AG04450 (cell line): ENCODE measurements at regions of chr9 and their contacts with region 1.

Region 1: GRCh38 chr9:127883959-127884358 is 6.5 kb upstream of the AK1 start:
- DNase-seq: no peak
- H3K4me3 ChIP-seq: no peak overlapping the region
- H3K27ac ChIP-seq: no peak overlapping the region
- H3K27me3 ChIP-seq: no peaks in the 10 kb centered on the region
- CTCF ChIP-seq: no peak

Region 2: DNA sequence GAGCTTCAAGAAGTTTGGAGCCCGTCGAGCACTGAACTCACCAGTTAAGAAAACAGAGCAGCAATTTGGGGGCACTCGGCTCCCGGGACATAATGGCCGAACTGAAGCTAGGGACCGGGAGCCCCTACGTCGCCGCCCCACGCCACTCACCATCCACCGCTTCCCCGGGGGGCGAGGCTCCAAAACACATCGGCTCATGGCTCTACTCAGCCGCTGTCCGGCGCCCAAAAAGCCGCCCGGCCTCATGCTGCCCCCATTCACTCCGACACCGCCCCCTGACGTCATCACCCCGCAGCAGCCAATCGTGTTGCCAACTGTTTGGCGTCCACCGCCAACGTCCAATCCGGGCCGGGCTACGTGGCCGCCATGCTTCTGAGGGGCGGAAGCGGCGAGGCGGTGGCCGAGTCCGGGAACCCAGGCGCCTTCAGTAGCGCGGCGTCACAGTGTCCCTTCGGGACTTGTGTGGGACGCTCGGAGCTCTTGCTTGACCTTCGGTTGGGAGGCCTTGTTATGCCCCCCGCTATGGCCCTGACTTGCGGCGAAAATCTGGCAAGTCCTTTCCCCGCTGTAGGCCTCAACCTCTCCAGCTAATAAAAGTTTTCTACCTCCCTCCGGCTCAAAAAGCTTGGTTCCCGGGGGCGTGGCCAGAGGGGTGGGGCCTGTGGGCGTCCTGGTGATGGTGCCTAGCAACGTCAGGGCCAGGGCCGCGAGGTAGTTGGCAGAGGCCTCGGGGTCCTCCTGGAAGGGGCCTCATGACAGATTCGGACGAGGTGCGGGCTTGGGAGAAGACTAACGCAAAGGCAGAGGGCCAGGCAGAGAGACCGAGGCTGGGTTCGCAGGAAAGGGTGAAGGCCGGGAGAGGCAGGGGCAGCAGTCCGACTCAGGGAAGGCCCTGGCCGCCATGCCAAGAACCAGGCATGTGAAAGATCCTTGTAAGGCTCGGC is 168.3 kb before region 1 on chr9 and contains the starts of genes PTRH1 and TTC16:
- CTCF ChIA-PET with region 1: no interaction called
- POLR2A ChIA-PET with region 1: no interaction called
- DNase-seq: peak; percentile 76
- H3K4me3 ChIP-seq: peak within 1 kb of the TSS; percentile 83
- H3K27ac ChIP-seq: peak within 1 kb of the TSS; percentile 61
- H3K27me3 ChIP-seq: no peaks in the 10 kb centered on the region
- CTCF ChIP-seq: no peak
- polyA plus RNA-seq, gene PTRH1: 5.2 and 6.1 TPM in 2 replicates
- polyA plus RNA-seq, gene TTC16: not detected in 2 replicates

Region 3: DNA sequence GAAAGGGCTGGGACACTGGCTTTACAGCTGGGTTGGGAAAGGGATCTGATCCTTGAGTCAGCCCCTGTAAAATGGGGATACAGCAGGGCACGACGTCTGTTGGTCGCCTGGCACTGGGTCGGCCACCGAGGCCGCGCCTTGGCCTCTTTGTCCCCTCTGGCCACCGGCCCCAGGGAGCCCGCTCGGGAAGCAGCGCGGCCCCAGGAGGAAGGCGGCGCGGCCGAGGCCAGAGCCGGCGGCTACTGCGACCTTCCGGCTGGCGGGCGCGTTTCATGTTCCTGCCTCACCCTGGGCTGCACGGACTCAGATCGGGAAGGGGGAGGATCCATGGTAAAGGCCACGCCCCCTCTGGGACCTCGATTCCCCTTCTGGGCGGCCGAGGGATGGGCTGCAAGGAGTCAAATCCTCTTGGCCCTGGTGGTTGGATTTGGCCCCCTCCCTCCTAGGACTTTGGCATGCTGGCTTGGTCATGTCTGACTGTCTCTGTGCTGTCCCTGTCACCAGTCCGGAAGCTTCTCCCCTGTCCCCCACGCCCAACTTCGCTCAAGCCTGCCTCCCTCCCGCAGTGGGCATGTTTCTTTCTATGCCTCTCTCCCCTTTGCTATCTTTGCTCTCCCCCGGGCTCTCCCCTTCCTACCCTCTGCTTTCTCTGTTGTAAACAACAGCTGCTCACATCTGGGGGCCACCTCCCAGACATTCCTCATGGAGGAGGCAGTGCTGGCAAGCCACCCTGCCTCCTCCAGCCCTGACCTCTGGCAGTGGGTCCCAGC is 55.5 kb before region 1 on chr9:
- CTCF ChIA-PET with region 1: no interaction called
- POLR2A ChIA-PET with region 1: interaction called, 13 read pairs
- DNase-seq: no peak
- H3K4me3 ChIP-seq: peak overlapping the region; percentile 20
- H3K27ac ChIP-seq: peak overlapping the region; percentile 70
- H3K27me3 ChIP-seq: no peaks in the 10 kb centered on the region
- CTCF ChIP-seq: no peak

Region 4: DNA sequence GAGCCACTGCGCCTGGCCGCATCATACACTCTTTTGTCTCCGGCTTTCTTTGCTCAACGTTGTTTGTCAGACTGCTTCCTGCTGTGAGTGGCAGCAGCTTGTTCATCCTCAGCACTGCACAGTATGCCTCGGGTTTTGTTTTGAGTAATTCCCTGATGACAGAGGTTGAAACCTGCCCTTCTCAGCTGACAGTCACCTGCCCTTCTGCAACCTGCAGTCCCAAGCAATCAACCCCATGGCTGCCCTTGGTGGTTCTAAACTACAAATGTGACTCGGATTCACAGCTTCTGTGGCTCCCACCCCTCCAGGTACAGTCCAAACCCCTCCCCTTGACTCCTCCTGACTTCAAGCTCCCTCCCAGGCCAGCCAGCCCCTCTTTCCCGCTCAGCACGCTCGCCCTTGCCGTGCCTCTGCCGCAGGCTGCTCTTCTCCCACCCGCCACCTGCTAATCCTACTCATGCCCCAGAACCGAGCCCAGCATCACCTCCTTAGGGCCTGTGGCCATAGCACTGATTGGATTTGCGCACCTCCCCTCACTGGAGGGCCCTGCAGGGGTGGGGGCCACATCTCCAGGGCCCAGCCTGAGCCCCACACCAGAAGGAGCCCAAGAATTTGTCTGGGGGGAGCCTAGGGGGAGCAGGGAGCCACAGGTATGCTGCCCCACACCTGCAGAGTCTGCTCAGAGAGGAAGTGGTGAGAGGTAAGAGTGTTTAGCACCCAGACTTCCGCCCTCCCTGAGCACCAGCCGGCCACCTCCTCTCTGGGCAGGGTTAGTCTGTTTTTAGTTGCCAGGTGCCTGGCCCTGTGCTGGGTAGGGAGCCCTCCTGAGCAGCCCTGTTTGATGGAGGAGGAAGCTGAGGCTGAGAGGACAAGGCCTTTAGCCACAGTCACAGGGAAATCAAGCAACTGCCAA is 86.7 kb after region 1 on chr9:
- CTCF ChIA-PET with region 1: no interaction called
- POLR2A ChIA-PET with region 1: no interaction called
- DNase-seq: no peak
- H3K4me3 ChIP-seq: no peak overlapping the region
- H3K27ac ChIP-seq: no peak overlapping the region
- H3K27me3 ChIP-seq: no peaks in the 10 kb centered on the region
- CTCF ChIP-seq: no peak